ENCODE measurements at regions of chr1 and their contacts with region 1.

Region 1: DNA sequence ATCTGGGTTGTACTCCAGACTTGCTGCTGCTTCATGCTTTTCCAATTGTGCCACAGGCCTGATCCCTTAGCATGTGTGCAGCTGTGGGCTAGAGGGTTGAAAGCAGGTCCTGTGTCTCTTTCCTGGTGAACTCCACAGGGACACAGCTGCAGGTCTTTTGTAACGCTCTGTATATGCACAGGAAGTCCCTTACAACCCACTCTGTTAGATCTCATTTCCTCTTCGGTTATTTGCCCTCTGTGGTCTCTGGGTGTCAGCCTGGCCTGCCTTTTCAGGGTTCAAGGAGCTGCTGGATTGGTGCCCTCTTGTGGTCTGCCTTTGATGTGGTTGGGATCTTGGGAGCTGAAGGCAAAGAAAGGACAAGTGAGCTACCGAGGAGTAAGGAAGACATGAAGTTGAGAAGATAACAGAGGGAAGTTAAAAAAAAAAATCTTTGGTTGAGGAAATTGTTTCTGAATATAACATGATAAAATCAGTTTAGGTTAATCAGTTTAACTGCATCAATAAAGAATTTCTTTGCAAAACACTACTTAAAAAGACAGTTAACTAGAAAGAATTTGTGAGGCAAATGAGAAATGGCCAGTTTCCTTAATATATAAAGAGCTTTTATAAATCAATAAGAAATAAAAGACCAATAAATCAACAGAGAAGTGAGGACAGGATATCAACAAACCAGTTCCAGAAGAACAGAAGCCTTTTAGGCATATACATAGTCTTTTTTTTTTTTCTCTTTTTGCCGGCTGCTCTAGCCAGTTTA is 44.1 kb downstream of the UCK2 start:
- DNase-seq: peak; percentile 85
- H3K4me3 Mint-ChIP-seq: no peak overlapping the region
- H3K27ac Mint-ChIP-seq: peak overlapping the region; percentile 5
- H3K4me1 Mint-ChIP-seq: peaks cover 33% of the 10 kb centered on the region
- H3K27me3 Mint-ChIP-seq: no peaks in the 10 kb centered on the region
- CTCF ChIP-seq: peak; percentile 25

Region 2: DNA sequence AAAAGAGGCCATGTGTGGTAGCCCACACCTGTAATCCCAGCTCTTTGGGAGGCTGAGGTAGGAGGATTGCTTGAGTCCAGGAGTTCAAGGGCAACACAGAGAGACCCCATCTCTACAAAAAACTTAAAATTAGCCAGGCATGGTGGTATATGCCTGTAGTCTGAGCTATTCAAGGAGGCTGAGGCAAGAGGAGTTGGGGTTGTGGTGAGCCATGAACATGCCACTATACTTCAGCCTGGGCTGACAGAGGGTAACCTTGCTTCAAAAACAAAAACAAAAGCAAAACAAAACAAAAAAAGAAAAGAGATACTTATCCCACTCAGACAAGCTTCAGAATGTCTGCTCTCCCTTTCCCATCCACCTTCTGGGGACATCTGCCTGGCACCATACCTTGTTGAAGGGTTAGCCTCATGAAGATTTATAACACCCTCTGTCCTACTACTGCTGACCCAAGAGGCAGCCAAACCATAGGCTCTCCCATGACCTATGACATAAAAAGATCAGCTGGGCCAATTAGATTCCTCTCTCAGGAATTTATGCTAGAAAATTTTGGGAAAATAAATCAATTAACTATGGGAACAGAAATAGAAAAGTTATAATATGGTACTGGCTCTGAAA is 116.0 kb before region 1 on chr1:
- CTCF ChIA-PET with region 1: no interaction called
- POLR2A ChIA-PET with region 1: no interaction called
- intact Hi-C with region 1: no loop called
- DNase-seq: no peak
- H3K4me3 Mint-ChIP-seq: no peak overlapping the region
- H3K27ac Mint-ChIP-seq: no peak overlapping the region
- H3K4me1 Mint-ChIP-seq: peaks cover 7% of the 10 kb centered on the region
- H3K27me3 Mint-ChIP-seq: no peaks in the 10 kb centered on the region
- CTCF ChIP-seq: no peak

Region 3: DNA sequence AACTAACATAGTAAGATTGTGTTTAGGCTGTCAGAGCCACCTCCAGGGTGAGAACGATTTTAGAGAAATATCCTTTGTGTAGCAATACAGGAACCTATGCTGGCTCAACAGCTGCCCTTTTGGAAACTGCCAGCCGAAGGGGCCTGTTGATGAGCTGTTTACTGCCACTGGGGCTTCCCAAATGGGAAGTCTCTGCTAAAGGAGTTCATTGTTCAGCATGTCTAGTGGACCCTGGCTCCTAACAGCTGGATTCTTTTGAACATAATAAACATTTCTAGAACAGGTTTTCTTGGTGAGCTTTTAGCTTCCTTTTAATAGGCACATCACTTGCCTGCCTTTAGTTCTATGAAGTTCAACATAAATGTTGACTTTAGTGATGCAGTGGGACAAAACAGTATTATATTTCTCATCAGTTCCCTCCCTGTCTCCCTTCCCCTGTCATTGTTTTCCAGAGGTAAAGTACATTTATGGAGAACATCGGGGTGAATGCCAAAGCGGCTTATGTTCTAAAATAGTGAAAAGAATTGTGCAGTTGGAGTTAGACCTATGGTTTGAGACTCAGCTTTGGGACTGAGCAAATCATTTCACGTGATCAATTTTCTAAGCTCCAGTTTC is 13.3 kb after region 1 on chr1:
- CTCF ChIA-PET with region 1: interaction called, 36 read pairs
- POLR2A ChIA-PET with region 1: interaction called, 11 read pairs
- intact Hi-C with region 1: no loop called
- DNase-seq: no peak
- H3K4me3 Mint-ChIP-seq: no peak overlapping the region
- H3K27ac Mint-ChIP-seq: peak overlapping the region; percentile 32
- H3K4me1 Mint-ChIP-seq: peaks cover 70% of the 10 kb centered on the region
- H3K27me3 Mint-ChIP-seq: no peaks in the 10 kb centered on the region
- CTCF ChIP-seq: no peak

Region 4: DNA sequence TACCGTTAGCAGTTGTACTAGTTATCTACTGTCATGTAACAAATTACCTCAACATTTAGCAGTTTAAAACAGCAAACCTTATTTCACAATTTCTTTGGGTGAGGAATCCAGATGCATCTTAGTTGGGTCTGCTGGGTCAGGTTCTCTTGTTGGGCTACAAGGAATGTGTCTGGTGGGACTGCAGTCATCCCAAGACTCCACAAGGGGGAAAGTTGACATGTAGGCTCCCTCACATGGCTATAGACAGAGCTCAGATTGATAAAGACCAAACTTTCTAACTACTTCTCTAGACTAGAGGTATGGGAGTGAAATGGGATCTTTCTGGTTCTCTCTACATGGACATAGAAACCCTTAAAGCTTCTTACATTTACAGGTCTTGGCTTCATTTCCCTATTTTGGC is 116.8 kb after region 1 on chr1:
- CTCF ChIA-PET with region 1: no interaction called
- POLR2A ChIA-PET with region 1: no interaction called
- intact Hi-C with region 1: no loop called
- DNase-seq: peak; percentile 20
- H3K4me3 Mint-ChIP-seq: no peak overlapping the region
- H3K27ac Mint-ChIP-seq: no peak overlapping the region
- H3K4me1 Mint-ChIP-seq: no peaks in the 10 kb centered on the region
- H3K27me3 Mint-ChIP-seq: peaks cover 11% of the 10 kb centered on the region
- CTCF ChIP-seq: no peak

Measured in MCF 10A (cell line).